ENCODE measurements at regions of chr10 and their contacts with region 1.

Region 1: DNA sequence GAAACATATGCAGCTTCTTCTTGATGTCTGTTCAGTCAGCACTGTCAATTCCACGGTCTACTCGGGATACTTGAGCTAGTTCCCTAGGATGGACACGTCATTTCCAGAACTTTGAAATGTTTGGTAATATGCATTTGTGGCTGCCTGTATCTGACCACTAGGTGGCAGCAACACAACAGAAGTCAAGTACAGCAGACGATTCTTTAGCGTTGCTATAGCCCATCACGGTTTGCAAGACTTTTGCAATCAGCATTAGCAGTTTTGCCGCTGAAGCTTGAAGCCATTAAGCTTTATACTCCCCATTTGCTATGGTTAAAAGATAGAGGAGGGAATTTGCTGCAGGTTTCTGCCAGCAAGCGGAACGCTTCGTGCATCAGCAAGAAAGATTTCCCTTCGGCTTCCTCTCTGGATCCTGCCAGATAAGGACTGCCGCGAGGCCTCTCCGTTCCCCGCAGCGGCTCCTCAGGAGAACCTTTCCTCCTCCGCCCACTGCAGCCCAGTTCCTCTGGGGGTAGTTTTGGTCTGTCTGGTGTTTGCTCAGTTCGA is 63.5 kb downstream of the ABCC2 start:
- DNase-seq: peak; percentile 81
- ATAC-seq: peak; percentile 94
- H3K4me3 Mint-ChIP-seq: no peak overlapping the region
- H3K27ac Mint-ChIP-seq: no peak overlapping the region
- H3K4me1 Mint-ChIP-seq: peaks cover 5% of the 10 kb centered on the region
- H3K27me3 Mint-ChIP-seq: no peaks in the 10 kb centered on the region
- CTCF ChIP-seq: peak; percentile 89

Region 2: DNA sequence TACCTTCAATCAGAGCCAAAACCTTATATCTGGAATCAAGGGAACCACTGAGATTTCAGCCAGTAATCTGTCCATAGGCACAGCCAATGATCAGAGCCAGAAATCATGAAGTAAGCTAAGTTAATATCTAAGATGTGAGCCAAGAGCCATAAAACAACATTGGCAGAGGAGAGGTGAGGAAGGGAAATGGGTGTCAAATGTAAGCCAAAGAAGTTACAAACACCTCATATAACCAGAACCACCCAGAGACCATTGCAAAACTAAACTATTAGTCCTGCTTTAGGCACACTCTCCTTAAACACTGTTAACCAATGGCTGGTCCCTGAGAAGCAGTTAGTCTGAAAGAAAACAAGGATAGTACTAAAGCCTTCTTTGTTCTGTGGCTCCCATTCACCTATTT is 783.3 kb before region 1 on chr10:
- CTCF ChIA-PET with region 1: no interaction called
- POLR2A ChIA-PET with region 1: no interaction called
- intact Hi-C with region 1: no loop called
- DNase-seq: no peak
- ATAC-seq: no peak
- H3K4me3 Mint-ChIP-seq: no peak overlapping the region
- H3K27ac Mint-ChIP-seq: no peak overlapping the region
- H3K4me1 Mint-ChIP-seq: no peaks in the 10 kb centered on the region
- H3K27me3 Mint-ChIP-seq: no peaks in the 10 kb centered on the region
- CTCF ChIP-seq: no peak

Region 3: DNA sequence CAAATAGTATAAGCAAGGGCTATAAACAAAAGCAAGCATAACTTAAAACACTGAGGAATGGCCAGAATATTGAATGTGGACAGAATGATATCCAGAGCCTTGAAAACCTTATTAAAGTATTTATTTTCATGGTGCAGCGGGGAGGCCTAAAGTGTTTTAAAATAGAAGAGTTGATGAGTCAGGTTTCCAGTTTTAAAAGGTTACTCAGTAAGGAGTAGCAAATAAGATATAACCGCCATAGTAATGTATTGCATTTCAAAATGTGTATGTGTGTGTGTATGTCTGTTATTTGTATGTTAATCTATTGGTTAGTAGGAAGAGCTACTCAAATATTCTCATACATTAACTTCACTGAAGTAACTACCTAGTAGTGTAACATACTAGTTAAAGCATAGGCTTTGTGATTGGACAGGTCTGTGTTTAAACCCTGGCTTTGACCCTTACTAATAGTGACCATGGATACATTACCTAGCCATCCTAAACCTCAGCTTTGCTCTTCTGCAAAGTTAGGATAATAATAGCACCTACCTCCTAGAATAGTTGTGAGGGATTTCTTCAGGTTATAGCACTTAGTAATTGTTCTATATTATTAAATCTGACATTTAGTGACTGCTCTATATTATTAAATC is 97.0 kb before region 1 on chr10:
- CTCF ChIA-PET with region 1: no interaction called
- POLR2A ChIA-PET with region 1: no interaction called
- intact Hi-C with region 1: no loop called
- DNase-seq: no peak
- ATAC-seq: no peak
- H3K4me3 Mint-ChIP-seq: no peak overlapping the region
- H3K27ac Mint-ChIP-seq: no peak overlapping the region
- H3K4me1 Mint-ChIP-seq: peaks cover 4% of the 10 kb centered on the region
- H3K27me3 Mint-ChIP-seq: no peaks in the 10 kb centered on the region
- CTCF ChIP-seq: no peak

Region 4: DNA sequence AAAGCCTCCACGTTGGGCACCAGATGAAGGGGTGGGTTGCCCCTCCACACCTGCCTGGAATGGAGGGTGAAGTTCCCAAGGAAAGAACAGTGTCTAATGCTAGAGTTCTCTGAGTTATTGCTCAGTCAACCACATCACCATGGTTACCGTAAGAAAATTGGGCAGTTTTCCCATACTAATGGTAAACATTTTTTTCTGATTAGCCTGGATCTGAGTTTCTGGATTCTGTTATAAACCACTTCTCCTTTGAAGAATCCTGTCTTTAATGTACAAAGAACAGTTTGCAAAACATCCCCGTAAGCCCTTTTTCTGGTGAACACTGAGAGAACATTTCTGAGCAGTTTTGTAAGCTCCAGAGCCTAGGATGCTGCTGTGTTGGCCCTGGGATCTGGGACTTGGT is 18.0 kb before region 1 on chr10:
- CTCF ChIA-PET with region 1: interaction called, 15 read pairs
- POLR2A ChIA-PET with region 1: no interaction called
- intact Hi-C with region 1: no loop called
- DNase-seq: no peak
- ATAC-seq: no peak
- H3K4me3 Mint-ChIP-seq: no peak overlapping the region
- H3K27ac Mint-ChIP-seq: no peak overlapping the region
- H3K4me1 Mint-ChIP-seq: peaks cover 5% of the 10 kb centered on the region
- H3K27me3 Mint-ChIP-seq: no peaks in the 10 kb centered on the region
- CTCF ChIP-seq: no peak

Region 5: DNA sequence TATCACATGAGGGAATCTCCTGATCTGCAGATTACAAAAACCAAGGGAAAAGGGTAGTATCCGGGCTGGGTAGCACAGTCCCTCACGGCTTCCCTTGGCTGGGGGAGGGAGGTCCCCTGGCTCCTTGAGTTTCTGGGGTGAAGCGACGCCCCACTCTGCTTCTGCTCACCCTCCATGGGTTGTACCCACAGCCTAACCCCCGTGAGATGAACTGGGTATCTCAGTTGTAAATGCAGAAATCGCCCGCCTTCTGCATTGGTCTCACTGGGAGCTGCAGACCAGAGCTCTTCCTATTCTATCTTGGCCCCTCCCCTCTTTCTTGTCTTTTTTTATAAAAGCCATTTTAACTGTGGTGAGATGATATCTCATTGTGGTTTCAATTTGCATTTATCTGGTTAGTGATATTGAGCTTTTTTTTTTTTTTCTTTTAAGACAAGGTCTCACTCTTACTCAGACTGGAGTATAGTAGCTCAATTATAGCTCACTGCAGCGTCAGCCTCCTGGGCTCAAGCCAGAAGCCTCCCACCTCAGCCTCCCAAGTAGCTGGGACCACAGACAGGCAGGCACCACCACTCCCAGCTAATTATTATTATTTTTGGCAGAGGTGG is 24.3 kb after region 1 on chr10:
- CTCF ChIA-PET with region 1: interaction called, 22 read pairs
- POLR2A ChIA-PET with region 1: no interaction called
- intact Hi-C with region 1: no loop called
- DNase-seq: peak; percentile 71
- ATAC-seq: peak; percentile 91
- H3K4me3 Mint-ChIP-seq: peak overlapping the region; percentile 42
- H3K27ac Mint-ChIP-seq: no peak overlapping the region
- H3K4me1 Mint-ChIP-seq: peaks cover 14% of the 10 kb centered on the region
- H3K27me3 Mint-ChIP-seq: peaks cover 74% of the 10 kb centered on the region
- CTCF ChIP-seq: no peak

Region 6: DNA sequence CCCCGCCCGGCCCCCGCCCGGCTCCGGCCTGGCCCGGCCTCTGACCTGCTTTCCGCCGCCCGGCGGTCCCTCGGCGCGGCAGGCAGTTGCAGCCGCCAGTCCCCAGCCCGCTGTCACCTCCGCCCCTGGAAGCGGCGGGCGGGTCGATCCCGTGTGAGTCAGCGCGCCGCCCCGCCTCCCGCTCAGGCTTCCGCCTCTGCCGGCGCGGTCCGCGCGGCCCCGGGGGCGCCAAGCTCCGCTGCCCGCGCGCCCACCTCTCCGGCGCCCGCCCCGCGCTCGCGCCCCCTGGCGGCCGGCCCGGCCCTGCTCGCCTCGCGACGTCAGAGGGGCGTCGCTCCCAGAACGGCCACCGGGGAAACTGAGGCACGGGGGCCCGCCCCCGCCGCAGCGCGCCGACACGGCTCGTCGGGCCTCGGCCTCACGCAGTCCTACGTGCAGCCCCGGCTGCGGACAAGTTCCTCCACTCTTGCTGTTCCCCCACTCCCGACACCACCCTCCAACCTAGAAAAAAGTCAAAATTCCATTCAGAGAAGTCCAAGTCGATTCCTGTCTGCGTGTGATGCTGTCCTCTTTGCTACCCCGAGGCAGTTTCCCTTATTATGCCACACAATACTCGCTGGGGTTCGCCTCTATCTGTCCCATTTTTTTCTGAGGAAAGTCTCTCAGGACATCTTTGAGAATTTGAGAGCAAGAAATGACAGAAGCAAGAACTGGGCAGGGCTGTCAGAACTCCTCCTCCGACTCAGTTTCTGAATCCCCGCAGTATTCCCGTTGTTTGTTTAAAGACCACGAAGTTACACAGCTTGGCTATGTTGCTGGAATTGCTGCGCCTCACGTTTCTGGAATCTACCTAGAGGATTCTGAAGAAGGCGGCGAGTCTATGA is 164.1 kb after region 1 on chr10 and contains the start of gene DNMBP:
- CTCF ChIA-PET with region 1: interaction called, 70 read pairs
- POLR2A ChIA-PET with region 1: no interaction called
- intact Hi-C with region 1: loop called (anchors 10 kb)
- DNase-seq: peak; percentile 87
- ATAC-seq: peak; percentile 92
- H3K4me3 Mint-ChIP-seq: peak within 1 kb of the TSS; percentile 82
- H3K27ac Mint-ChIP-seq: no peak within 1 kb of the TSS
- H3K4me1 Mint-ChIP-seq: peaks cover 46% of the 10 kb centered on the region
- H3K27me3 Mint-ChIP-seq: no peaks in the 10 kb centered on the region
- CTCF ChIP-seq: peak; percentile 73
- total RNA-seq, gene DNMBP: 2.6 to 2.9 TPM

Region 7: DNA sequence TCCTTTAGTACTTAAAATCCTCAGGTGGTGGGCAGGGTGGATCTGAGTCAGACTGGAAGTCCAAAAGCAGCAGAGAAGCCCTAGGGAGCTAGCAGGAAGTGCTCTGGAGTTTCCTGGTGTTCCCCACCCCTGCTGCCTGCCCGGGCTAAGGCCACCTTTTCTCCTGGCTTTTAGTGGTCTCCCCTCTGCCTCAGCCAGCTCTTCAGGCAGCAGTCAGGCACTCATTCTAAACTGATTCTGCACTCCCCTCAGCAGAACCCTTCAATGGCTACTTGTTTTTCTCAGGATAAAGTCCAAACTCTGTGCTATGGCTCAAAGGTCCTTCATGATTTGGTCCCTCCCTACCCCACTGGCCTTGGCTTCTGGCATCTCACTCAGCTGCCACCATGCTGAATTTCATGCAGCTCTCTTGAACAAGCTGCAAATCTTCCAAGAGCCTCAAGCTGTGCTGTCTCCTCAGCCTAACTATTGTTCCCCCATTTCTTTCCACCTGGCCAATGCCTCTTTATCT is 192.7 kb after region 1 on chr10:
- CTCF ChIA-PET with region 1: interaction called, 196 read pairs
- POLR2A ChIA-PET with region 1: no interaction called
- intact Hi-C with region 1: no loop called
- DNase-seq: no peak
- ATAC-seq: no peak
- H3K4me3 Mint-ChIP-seq: no peak overlapping the region
- H3K27ac Mint-ChIP-seq: no peak overlapping the region
- H3K4me1 Mint-ChIP-seq: no peaks in the 10 kb centered on the region
- H3K27me3 Mint-ChIP-seq: peaks cover 3% of the 10 kb centered on the region
- CTCF ChIP-seq: no peak

Region 8: GRCh38 chr10:100053686-100054460 is 208.0 kb after region 1 on chr10:
- CTCF ChIA-PET with region 1: interaction called, 196 read pairs
- POLR2A ChIA-PET with region 1: no interaction called
- intact Hi-C with region 1: no loop called
- DNase-seq: no peak
- ATAC-seq: no peak
- H3K4me3 Mint-ChIP-seq: no peak overlapping the region
- H3K27ac Mint-ChIP-seq: no peak overlapping the region
- H3K4me1 Mint-ChIP-seq: no peaks in the 10 kb centered on the region
- H3K27me3 Mint-ChIP-seq: peaks cover 7% of the 10 kb centered on the region
- CTCF ChIP-seq: no peak

Measured in activated CD8-positive, alpha-beta T cell treated with anti-CD3 and anti-CD28 coated beads for 36 hours (primary cell).